ENCODE measurements at regions of chr9 and their contacts with region 1.

Region 1: GRCh38 chr9:97615439-97616072 is 17.6 kb downstream of the TSTD2 start:
- H3K4me3 ChIP-seq: no peak overlapping the region
- H3K27ac ChIP-seq: no peak overlapping the region
- H3K4me1 ChIP-seq: no peaks in the 10 kb centered on the region
- CTCF ChIP-seq: 0 out of 2 replicates have a peak, but pooled peaks have one; percentile 43

Region 2: DNA sequence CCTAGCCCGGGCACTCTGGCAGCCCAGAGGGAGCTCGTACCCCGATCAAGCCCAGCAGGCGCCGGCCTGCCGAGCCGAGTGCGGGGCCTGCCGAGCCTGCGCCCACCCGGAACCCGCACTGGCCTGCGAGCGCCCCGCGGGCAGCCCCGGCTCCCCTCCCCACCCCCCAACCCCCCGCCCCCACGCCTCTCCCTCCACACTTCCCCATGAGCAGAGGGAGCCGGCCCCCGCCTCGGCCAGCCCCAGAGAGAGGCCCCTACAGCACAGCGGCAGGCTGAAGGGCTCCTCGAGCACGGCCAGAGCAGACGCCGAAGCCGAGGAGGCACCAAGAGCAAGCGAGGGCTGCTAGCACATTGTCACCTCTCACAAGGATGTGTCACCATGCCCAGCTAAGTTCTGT is 344.3 kb before region 1 on chr9:
- CTCF ChIA-PET with region 1: no interaction called
- POLR2A ChIA-PET with region 1: no interaction called
- H3K4me3 ChIP-seq: no peak overlapping the region
- H3K27ac ChIP-seq: no peak overlapping the region
- H3K4me1 ChIP-seq: no peaks in the 10 kb centered on the region
- CTCF ChIP-seq: no peak

Region 3: GRCh38 chr9:97386733-97387503 is 228.6 kb before region 1 on chr9:
- CTCF ChIA-PET with region 1: interaction called, 47 read pairs
- POLR2A ChIA-PET with region 1: no interaction called
- H3K4me3 ChIP-seq: no peak overlapping the region
- H3K27ac ChIP-seq: no peak overlapping the region
- H3K4me1 ChIP-seq: no peaks in the 10 kb centered on the region
- CTCF ChIP-seq: peak; percentile 80

Region 4: DNA sequence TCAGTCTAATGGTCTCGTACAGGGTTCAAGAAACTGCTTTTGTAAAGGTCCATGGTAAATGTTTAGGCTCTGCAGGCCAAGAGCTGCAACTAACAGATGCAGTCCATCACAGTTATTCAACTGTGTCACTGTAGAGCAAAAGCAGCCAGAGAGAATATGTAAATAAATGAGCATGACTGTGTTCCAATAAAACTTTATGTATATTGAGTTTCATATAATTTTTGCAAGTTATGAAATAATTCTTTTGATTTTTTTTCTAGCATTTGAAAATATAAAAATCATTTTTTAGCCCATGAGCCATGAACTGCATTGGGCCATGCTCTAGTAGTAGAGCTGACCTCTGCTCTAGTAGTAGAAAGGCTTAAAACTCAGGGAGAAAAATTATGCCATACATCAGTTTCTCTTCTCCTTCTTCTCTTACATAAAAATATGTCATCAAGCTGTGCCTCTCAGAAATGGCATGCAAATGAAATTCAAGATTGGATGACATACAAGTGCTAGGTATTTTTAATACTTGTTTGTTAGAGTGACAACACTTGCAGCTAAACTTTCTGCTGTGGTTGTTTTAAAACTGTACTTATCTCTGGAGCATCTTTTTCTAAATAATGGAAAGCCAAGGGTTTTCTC is 156.3 kb before region 1 on chr9:
- CTCF ChIA-PET with region 1: interaction called, 16 read pairs
- POLR2A ChIA-PET with region 1: no interaction called
- H3K4me3 ChIP-seq: no peak overlapping the region
- H3K27ac ChIP-seq: no peak overlapping the region
- H3K4me1 ChIP-seq: no peaks in the 10 kb centered on the region
- CTCF ChIP-seq: no peak

Region 5: GRCh38 chr9:97475059-97475458 is 140.5 kb before region 1 on chr9:
- CTCF ChIA-PET with region 1: interaction called, 255 read pairs
- POLR2A ChIA-PET with region 1: no interaction called
- H3K4me3 ChIP-seq: no peak overlapping the region
- H3K27ac ChIP-seq: no peak overlapping the region
- H3K4me1 ChIP-seq: no peaks in the 10 kb centered on the region
- CTCF ChIP-seq: no peak

Region 6: GRCh38 chr9:97548819-97549540 is 66.6 kb before region 1 on chr9:
- CTCF ChIA-PET with region 1: no interaction called
- POLR2A ChIA-PET with region 1: no interaction called
- H3K4me3 ChIP-seq: no peak overlapping the region
- H3K27ac ChIP-seq: no peak overlapping the region
- H3K4me1 ChIP-seq: no peaks in the 10 kb centered on the region
- CTCF ChIP-seq: no peak

Region 7: GRCh38 chr9:97638666-97639065 is 23.1 kb after region 1 on chr9:
- CTCF ChIA-PET with region 1: interaction called, 11 read pairs
- POLR2A ChIA-PET with region 1: interaction called, 3 read pairs
- H3K4me3 ChIP-seq: no peak overlapping the region
- H3K27ac ChIP-seq: no peak overlapping the region
- H3K4me1 ChIP-seq: no peaks in the 10 kb centered on the region; the same call in 1 of the 2 replicates
- CTCF ChIP-seq: no peak

Region 8: GRCh38 chr9:97890038-97890437 is 274.5 kb after region 1 on chr9:
- CTCF ChIA-PET with region 1: no interaction called
- POLR2A ChIA-PET with region 1: no interaction called
- H3K4me3 ChIP-seq: no peak overlapping the region
- H3K27ac ChIP-seq: no peak overlapping the region
- H3K4me1 ChIP-seq: no peaks in the 10 kb centered on the region
- CTCF ChIP-seq: no peak